T-cell (primary cell): ENCODE measurements at regions of chr10 and their contacts with region 1.

Region 1: GRCh38 chr10:114550756-114551635 is 107.1 kb downstream of the ABLIM1 start:
- DNase-seq: peak in 1 of 35 experiments; percentile 50
- ATAC-seq: no peak
- H3K4me3 ChIP-seq: no peak overlapping the region
- H3K4me3 Mint-ChIP-seq: no peak overlapping the region
- H3K27ac ChIP-seq: no peak overlapping the region
- H3K27ac Mint-ChIP-seq: peak overlapping the region in 1 of 2 donors; percentile 44
- H3K4me1 ChIP-seq: peaks cover 20 to 21% of the 10 kb centered on the region in 2 experiments
- H3K4me1 Mint-ChIP-seq: peaks cover 33 to 38% (median 33%) of the 10 kb centered on the region in 3 donors
- H3K27me3 ChIP-seq: no peaks in the 10 kb centered on the region
- H3K27me3 Mint-ChIP-seq: no peaks in the 10 kb centered on the region

Region 2: GRCh38 chr10:114526504-114527238 is 24.3 kb before region 1 on chr10:
- CTCF ChIA-PET with region 1: interaction called, 5 to 88 read pairs
- POLR2A ChIA-PET with region 1: interaction called, 5 to 220 read pairs
- DNase-seq: peak; percentile 71 to 97 (median 91)
- ATAC-seq: peak; percentile 92 to 96 (median 96)
- H3K4me3 ChIP-seq: peak overlapping the region; percentile 68 to 93
- H3K4me3 Mint-ChIP-seq: peak overlapping the region; percentile 93 to 94 (median 94)
- H3K27ac ChIP-seq: peak overlapping the region; percentile 83
- H3K27ac Mint-ChIP-seq: peak overlapping the region; percentile 95 to 98
- H3K4me1 ChIP-seq: peaks cover 33 to 59% of the 10 kb centered on the region in 2 experiments
- H3K4me1 Mint-ChIP-seq: peaks cover 57 to 74% (median 67%) of the 10 kb centered on the region in 3 donors
- H3K27me3 ChIP-seq: no peaks in the 10 kb centered on the region
- H3K27me3 Mint-ChIP-seq: no peaks in the 10 kb centered on the region

Region 3: DNA sequence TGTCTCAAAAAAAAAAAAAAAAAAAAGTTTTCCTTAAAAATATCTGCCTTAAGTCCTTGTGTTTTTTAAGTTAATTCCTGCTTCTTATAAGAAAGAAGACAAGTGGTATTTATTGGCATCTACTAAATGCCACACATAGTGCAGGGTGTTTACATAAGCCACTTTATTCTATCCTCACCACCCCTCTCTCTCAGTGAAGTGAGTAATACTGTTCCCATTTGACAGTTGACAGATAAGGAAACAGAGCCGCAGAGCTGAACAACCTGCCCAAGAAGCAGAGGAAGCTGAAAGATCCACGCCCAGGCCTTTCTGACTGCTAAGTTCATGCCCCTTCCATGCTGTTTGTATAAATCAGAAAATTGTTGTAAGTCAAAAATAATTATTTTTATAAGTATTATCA is 53.0 kb after region 1 on chr10:
- CTCF ChIA-PET with region 1: no interaction called
- POLR2A ChIA-PET with region 1: no interaction called
- DNase-seq: no peak
- ATAC-seq: no peak
- H3K4me3 ChIP-seq: no peak overlapping the region
- H3K4me3 Mint-ChIP-seq: no peak overlapping the region
- H3K27ac ChIP-seq: no peak overlapping the region
- H3K27ac Mint-ChIP-seq: no peak overlapping the region
- H3K4me1 ChIP-seq: no peaks in the 10 kb centered on the region
- H3K4me1 Mint-ChIP-seq: peaks cover 4 to 11% (median 6%) of the 10 kb centered on the region in 3 donors
- H3K27me3 ChIP-seq: no peaks in the 10 kb centered on the region
- H3K27me3 Mint-ChIP-seq: peaks cover 0 to 3% of the 10 kb centered on the region in 2 donors